MCF 10A (cell line): ENCODE measurements at regions of chr9 and their contacts with region 1.

Region 1: GRCh38 chr9:1460143-1460769 is 410.1 kb downstream of the DMRT2 start:
- DNase-seq: peak; percentile 59
- H3K4me3 Mint-ChIP-seq: no peak overlapping the region
- H3K27ac Mint-ChIP-seq: no peak overlapping the region
- H3K4me1 Mint-ChIP-seq: peaks cover 22% of the 10 kb centered on the region
- H3K27me3 Mint-ChIP-seq: no peaks in the 10 kb centered on the region
- CTCF ChIP-seq: peak; percentile 66

Region 2: GRCh38 chr9:1400983-1401382 is 59.3 kb before region 1 on chr9:
- CTCF ChIA-PET with region 1: no interaction called
- POLR2A ChIA-PET with region 1: no interaction called
- intact Hi-C with region 1: no loop called
- DNase-seq: no peak
- H3K4me3 Mint-ChIP-seq: no peak overlapping the region
- H3K27ac Mint-ChIP-seq: no peak overlapping the region
- H3K4me1 Mint-ChIP-seq: no peaks in the 10 kb centered on the region
- H3K27me3 Mint-ChIP-seq: peaks cover 3% of the 10 kb centered on the region
- CTCF ChIP-seq: no peak

Region 3: GRCh38 chr9:1604942-1605560 is 144.8 kb after region 1 on chr9:
- CTCF ChIA-PET with region 1: interaction called, 6 read pairs
- POLR2A ChIA-PET with region 1: no interaction called
- intact Hi-C with region 1: loop called (anchors 1 kb)
- DNase-seq: peak; percentile 56
- H3K4me3 Mint-ChIP-seq: no peak overlapping the region
- H3K27ac Mint-ChIP-seq: no peak overlapping the region
- H3K4me1 Mint-ChIP-seq: no peaks in the 10 kb centered on the region
- H3K27me3 Mint-ChIP-seq: peaks cover 12% of the 10 kb centered on the region
- CTCF ChIP-seq: peak; percentile 76